ENCODE measurements at regions of chr6 and their contacts with region 1.

Region 1: DNA sequence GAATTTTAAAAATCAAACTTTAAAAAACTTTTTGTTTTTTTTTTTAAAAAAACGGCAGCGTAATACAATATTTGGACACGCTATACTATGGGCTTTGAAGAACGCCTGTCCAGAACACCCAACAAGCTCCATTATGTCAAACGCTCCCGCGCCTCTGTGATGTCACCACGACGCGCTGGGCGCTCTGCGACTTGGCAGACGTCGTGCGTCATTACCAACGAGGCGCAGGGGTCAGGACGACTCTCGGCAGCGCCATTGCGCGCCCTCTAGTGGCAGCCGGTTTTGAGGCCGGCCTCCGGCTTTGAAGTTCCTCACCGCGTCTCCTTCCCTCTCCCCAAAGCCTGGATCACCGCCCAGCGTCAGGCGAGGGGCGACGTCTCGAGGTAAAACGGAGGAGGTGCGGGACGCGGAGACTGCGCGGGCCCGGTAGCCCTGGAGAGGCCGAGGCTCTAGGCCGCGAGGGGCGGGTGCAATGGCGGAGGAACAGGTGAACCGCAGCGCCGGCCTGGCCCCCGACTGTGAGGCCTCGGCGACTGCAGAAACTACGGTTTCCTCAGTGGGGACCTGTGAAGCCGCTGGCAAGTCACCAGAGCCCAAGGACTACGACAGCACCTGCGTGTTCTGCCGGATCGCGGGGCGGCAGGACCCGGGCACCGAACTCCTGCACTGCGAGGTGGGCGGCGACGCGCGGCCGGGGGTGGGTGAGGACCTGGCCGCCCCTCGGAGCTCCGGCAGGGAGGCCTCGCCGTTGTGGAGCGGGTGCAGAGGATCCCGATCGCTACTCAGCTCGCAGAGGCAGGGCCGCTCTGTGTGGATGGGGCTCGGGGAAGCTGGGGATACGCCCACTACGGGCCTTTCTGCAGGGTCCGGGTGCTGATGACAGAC is at the start of gene HINT3:
- DNase-seq: peak; percentile 97 to 100
- ATAC-seq: peak; percentile 86
- total RNA-seq, gene HINT3: 24.7 to 25.7 TPM

Region 2: GRCh38 chr6:125779924-125780539 is 176.7 kb before region 1 on chr6:
- intact Hi-C with region 1: loop called in 1 of 2 experiments (anchors 5 kb)
- DNase-seq: peak; percentile 70 to 78
- ATAC-seq: peak; percentile 93

Region 3: GRCh38 chr6:125858427-125859320 is 98.1 kb before region 1 on chr6:
- intact Hi-C with region 1: loop called in 1 of 2 experiments (anchors 10 kb)
- DNase-seq: peak; percentile 42 to 59
- ATAC-seq: peak; percentile 93